ENCODE measurements at regions of chr5 and their contacts with region 1.

Region 1: GRCh38 chr5:143290125-143290524 is 113.4 kb downstream of the NR3C1 start:
- DNase-seq: no peak
- ATAC-seq: no peak
- H3K4me3 ChIP-seq: no peak overlapping the region
- H3K4me3 Mint-ChIP-seq: no peak overlapping the region
- H3K27ac ChIP-seq: no peak overlapping the region
- H3K27ac Mint-ChIP-seq: no peak overlapping the region
- H3K4me1 ChIP-seq: no peaks in the 10 kb centered on the region
- H3K4me1 Mint-ChIP-seq: peaks cover 9% of the 10 kb centered on the region
- H3K27me3 ChIP-seq: no peaks in the 10 kb centered on the region
- H3K27me3 Mint-ChIP-seq: no peaks in the 10 kb centered on the region
- CTCF ChIP-seq: no peak

Region 2: DNA sequence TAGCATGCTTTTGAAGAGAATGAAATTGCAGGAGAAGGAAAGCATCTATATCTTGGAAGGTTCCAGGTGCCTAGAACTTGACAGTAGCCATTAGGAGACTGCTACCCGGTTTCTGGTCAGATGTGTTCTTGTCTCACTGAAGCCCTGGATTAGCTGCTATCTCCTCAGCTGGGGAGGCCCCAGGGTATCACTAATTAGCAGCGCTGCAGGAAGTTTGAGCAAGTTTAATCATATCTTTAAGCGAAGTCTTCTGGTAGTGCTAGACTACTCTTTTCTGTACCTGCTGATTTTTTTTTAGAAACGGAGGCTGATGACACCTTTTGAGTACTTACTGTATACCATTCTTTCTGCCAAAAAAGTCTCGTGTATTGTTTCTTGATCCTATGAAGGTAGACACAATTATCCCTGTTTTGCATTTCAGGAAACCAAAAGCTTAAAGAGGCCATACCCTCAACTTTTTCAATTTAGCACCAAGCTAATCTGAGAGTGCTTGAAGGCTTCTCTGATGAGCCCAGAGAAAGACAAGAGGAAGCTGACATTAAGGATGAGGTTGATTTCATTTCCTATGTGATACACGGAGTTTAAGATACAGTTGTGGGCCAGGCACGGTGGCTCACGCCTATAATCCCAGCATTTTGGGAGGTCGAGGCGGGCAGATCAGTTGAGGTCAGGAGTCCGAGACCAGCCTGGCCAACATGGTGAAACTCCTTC is 318.7 kb before region 1 on chr5:
- CTCF ChIA-PET with region 1: no interaction called
- POLR2A ChIA-PET with region 1: no interaction called
- intact Hi-C with region 1: no loop called
- DNase-seq: peak in 2 of 9 experiments; percentile 30 to 55
- ATAC-seq: peak; percentile 36
- H3K4me3 ChIP-seq: no peak overlapping the region
- H3K4me3 Mint-ChIP-seq: peak overlapping the region; percentile 16
- H3K27ac ChIP-seq: peak overlapping the region in 1 of 2 experiments; percentile 88
- H3K27ac Mint-ChIP-seq: peak overlapping the region; percentile 62
- H3K4me1 ChIP-seq: peaks cover 12% of the 10 kb centered on the region
- H3K4me1 Mint-ChIP-seq: peaks cover 58% of the 10 kb centered on the region
- H3K27me3 ChIP-seq: no peaks in the 10 kb centered on the region
- H3K27me3 Mint-ChIP-seq: no peaks in the 10 kb centered on the region
- CTCF ChIP-seq: no peak

Region 3: GRCh38 chr5:143229896-143230675 is 60.0 kb before region 1 on chr5:
- CTCF ChIA-PET with region 1: no interaction called
- POLR2A ChIA-PET with region 1: no interaction called
- intact Hi-C with region 1: loop called in 1 of 2 experiments (anchors 5 kb)
- DNase-seq: peak in 6 of 9 experiments; percentile 14 to 77 (median 52)
- ATAC-seq: peak; percentile 89
- H3K4me3 ChIP-seq: peak overlapping the region in 1 of 2 experiments; percentile 28
- H3K4me3 Mint-ChIP-seq: peak overlapping the region; percentile 75
- H3K27ac ChIP-seq: peak overlapping the region in 1 of 2 experiments; percentile 58
- H3K27ac Mint-ChIP-seq: peak overlapping the region; percentile 88
- H3K4me1 ChIP-seq: peaks cover 17% of the 10 kb centered on the region
- H3K4me1 Mint-ChIP-seq: peaks cover 29% of the 10 kb centered on the region
- H3K27me3 ChIP-seq: no peaks in the 10 kb centered on the region
- H3K27me3 Mint-ChIP-seq: no peaks in the 10 kb centered on the region
- CTCF ChIP-seq: no peak